Caco-2 (cell line): ENCODE measurements at regions of chr12 and their contacts with region 1.

Region 1: GRCh38 chr12:101697197-101697929 is at the start of gene CHPT1:
- DNase-seq: peak; percentile 86 to 90
- H3K4me3 ChIP-seq: peak within 1 kb of the TSS; percentile 81
- H3K4me3 Mint-ChIP-seq: peak within 1 kb of the TSS; percentile 94
- H3K27ac Mint-ChIP-seq: peak within 1 kb of the TSS; percentile 77
- H3K4me1 ChIP-seq: peaks cover 15% of the 10 kb centered on the region
- H3K4me1 Mint-ChIP-seq: peaks cover 17% of the 10 kb centered on the region
- H3K27me3 ChIP-seq: no peaks in the 10 kb centered on the region
- H3K27me3 Mint-ChIP-seq: no peaks in the 10 kb centered on the region
- CTCF ChIP-seq: no peak
- total RNA-seq, gene CHPT1: 45.4 and 54.6 TPM in 2 replicates

Region 2: GRCh38 chr12:101439236-101439635 is 258.1 kb before region 1 on chr12:
- CTCF ChIA-PET with region 1: no interaction called
- POLR2A ChIA-PET with region 1: no interaction called
- intact Hi-C with region 1: no loop called
- DNase-seq: no peak
- H3K4me3 ChIP-seq: no peak overlapping the region
- H3K4me3 Mint-ChIP-seq: no peak overlapping the region
- H3K27ac Mint-ChIP-seq: no peak overlapping the region
- H3K4me1 ChIP-seq: no peaks in the 10 kb centered on the region
- H3K4me1 Mint-ChIP-seq: no peaks in the 10 kb centered on the region
- H3K27me3 ChIP-seq: no peaks in the 10 kb centered on the region
- H3K27me3 Mint-ChIP-seq: peaks cover 11% of the 10 kb centered on the region
- CTCF ChIP-seq: no peak

Region 3: DNA sequence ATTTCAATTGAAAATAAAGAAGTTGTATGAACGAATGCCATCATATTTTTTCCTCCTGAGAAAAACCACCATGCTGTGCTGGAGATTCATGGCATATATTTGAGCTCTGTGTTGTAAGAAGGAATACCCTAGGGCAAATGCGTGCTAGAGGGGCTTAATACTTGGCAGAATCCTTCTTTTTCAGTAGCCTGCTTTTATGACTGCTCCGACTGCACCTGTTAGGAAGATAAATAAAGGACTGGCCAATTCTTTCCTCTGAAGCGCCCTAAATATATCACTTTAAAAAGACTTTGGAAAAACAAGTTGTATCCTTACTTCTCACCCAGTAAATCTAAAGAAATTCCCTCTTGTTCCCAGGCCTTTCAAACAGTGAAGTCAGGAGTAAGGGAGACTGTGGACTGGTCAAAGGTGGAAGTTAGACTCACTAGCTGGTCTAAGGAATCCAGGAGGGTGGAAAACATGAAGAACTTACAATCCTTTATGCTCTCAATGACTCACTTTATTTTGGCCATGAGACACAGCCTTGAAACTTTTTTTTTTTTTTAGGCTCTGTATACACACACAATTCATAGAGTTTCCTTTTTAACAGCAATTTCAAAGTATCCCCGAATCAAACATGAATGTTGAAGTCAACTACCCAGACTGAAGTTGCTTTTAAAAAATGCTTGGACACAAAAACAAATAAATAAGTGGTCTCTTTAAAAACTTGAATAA is 97.4 kb before region 1 on chr12:
- CTCF ChIA-PET with region 1: no interaction called
- POLR2A ChIA-PET with region 1: no interaction called
- intact Hi-C with region 1: loop called (anchors 2 kb)
- DNase-seq: no peak
- H3K4me3 ChIP-seq: no peak overlapping the region
- H3K4me3 Mint-ChIP-seq: no peak overlapping the region
- H3K27ac Mint-ChIP-seq: peak overlapping the region; percentile 51
- H3K4me1 ChIP-seq: peaks cover 43% of the 10 kb centered on the region
- H3K4me1 Mint-ChIP-seq: peaks cover 24% of the 10 kb centered on the region
- H3K27me3 ChIP-seq: no peaks in the 10 kb centered on the region
- H3K27me3 Mint-ChIP-seq: no peaks in the 10 kb centered on the region
- CTCF ChIP-seq: no peak

Region 4: GRCh38 chr12:101607902-101608742 is 89.2 kb before region 1 on chr12:
- CTCF ChIA-PET with region 1: no interaction called
- POLR2A ChIA-PET with region 1: no interaction called
- intact Hi-C with region 1: loop called (anchors 1 kb)
- DNase-seq: peak; percentile 90 to 92
- H3K4me3 ChIP-seq: no peak overlapping the region
- H3K4me3 Mint-ChIP-seq: peak overlapping the region; percentile 74
- H3K27ac Mint-ChIP-seq: peak overlapping the region; percentile 99
- H3K4me1 ChIP-seq: peaks cover 45% of the 10 kb centered on the region
- H3K4me1 Mint-ChIP-seq: peaks cover 22% of the 10 kb centered on the region
- H3K27me3 ChIP-seq: no peaks in the 10 kb centered on the region
- H3K27me3 Mint-ChIP-seq: no peaks in the 10 kb centered on the region
- CTCF ChIP-seq: no peak

Region 5: DNA sequence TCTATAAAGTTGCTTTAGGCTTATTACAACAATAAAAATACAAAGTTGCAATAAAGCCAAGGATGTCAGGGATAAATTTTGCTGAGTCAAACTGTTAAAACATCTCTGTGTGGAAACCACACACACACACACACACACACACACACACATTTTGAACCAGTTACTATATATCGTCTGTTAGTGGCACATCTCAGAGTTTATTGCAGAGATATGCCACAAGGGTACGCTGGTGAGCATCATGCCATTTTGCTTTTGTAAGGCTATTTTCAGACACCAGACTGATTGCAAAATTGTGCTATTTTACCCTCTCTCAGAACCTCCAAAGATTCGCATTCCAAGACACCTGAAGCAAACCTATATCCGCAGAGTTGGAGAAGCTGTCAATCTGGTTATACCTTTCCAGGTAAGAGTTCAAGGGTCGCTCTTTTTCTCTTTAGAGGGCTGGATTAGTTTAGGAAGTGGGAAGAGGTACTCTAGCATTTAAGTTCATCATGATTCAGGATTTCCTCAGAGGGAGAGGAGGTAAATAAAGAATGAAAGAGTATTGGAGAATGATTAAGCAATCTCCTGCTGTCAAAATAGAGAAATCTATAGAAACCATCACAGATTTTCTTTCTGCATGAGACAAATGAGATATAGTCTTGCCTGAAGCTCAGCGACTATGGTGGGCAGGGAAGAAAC is 27.2 kb before region 1 on chr12:
- CTCF ChIA-PET with region 1: no interaction called
- POLR2A ChIA-PET with region 1: no interaction called
- intact Hi-C with region 1: loop called (anchors 1 kb)
- DNase-seq: peak; percentile 42 to 58
- H3K4me3 ChIP-seq: no peak overlapping the region
- H3K4me3 Mint-ChIP-seq: no peak overlapping the region
- H3K27ac Mint-ChIP-seq: no peak overlapping the region
- H3K4me1 ChIP-seq: peaks cover 7% of the 10 kb centered on the region; the same call in 1 of the 2 replicates
- H3K4me1 Mint-ChIP-seq: peaks cover 22% of the 10 kb centered on the region
- H3K27me3 ChIP-seq: no peaks in the 10 kb centered on the region
- H3K27me3 Mint-ChIP-seq: peaks cover 2% of the 10 kb centered on the region
- CTCF ChIP-seq: peak; percentile 62 to 64

Region 6: GRCh38 chr12:101749657-101750056 is 52.3 kb after region 1 on chr12:
- CTCF ChIA-PET with region 1: no interaction called
- POLR2A ChIA-PET with region 1: no interaction called
- intact Hi-C with region 1: no loop called
- DNase-seq: no peak
- H3K4me3 ChIP-seq: no peak overlapping the region
- H3K4me3 Mint-ChIP-seq: no peak overlapping the region
- H3K27ac Mint-ChIP-seq: no peak overlapping the region
- H3K4me1 ChIP-seq: no peaks in the 10 kb centered on the region
- H3K4me1 Mint-ChIP-seq: no peaks in the 10 kb centered on the region
- H3K27me3 ChIP-seq: no peaks in the 10 kb centered on the region
- H3K27me3 Mint-ChIP-seq: no peaks in the 10 kb centered on the region
- CTCF ChIP-seq: no peak

Region 7: DNA sequence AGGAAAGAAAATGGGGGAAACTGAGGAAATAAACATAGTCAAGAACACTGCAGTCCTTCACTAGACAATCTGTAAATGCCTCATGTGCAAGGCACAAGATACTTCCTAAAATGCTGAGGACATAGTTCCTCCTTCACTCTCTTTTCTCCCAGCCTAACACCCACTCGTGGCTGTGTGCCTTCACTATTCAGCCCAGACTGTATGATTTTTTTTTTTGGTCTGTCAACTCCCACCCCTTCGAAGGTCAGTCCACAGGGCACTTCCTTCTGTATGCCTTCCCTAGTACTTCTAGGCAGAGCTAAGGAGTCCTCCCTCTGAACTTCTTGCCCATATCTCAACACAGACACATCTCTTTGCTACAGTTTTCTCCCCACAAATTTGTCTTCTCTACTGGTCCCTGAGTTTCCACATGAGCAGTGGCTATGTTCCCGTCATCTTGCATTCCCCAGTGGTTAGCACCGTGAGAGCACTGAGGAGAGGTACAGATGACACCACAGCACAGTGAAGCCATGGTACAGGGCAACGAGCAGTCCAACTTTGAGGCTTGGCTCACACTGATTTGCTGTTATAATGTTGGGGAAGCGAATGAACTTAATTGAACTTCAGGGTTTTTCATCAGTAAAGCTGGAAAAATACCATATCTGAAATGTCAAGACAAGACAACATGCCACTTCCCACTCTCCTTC is 66.0 kb after region 1 on chr12:
- CTCF ChIA-PET with region 1: no interaction called
- POLR2A ChIA-PET with region 1: no interaction called
- intact Hi-C with region 1: no loop called
- DNase-seq: no peak
- H3K4me3 ChIP-seq: no peak overlapping the region
- H3K4me3 Mint-ChIP-seq: no peak overlapping the region
- H3K27ac Mint-ChIP-seq: no peak overlapping the region
- H3K4me1 ChIP-seq: no peaks in the 10 kb centered on the region
- H3K4me1 Mint-ChIP-seq: peaks cover 6% of the 10 kb centered on the region
- H3K27me3 ChIP-seq: no peaks in the 10 kb centered on the region
- H3K27me3 Mint-ChIP-seq: no peaks in the 10 kb centered on the region
- CTCF ChIP-seq: no peak